ENCODE measurements at regions of chr19 and their contacts with region 1.

Region 1: DNA sequence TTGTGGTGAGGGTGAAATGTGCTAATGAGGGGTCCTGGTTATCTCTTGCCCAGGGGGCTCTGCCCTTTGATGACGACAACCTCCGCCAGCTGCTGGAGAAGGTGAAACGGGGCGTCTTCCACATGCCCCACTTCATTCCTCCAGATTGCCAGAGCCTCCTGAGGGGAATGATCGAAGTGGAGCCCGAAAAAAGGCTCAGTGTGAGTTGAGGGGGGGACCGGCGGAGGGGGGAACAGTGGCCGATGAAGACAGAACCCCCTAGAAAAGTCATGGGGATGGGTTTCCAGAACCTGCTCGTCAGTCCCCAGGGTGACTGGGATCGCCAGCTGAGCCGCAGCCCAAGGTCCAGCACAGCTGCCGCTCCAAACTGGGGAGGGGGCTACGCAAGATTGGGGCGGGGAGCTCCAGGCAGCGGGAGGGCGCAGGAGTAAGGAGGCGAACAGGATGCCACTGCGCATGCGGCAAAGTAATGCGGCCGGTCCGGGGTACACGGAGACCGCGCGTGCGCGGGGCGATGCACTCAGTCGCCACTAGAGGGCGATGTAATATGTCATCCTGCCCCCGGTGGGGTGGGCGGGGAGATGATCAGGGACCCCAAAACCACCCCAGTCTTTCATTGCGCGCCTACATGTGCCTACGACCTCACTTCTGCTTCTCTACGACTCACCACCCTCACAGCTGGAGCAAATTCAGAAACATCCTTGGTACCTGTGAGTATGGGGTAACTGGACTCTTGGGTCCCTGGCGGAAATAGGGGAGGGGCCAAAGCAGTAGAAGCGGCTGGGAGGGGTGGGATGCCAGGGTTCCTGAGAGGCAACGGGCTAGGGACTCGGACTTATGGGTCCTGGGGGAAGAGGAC is 17.9 kb downstream of the BRSK1 start:
- DNase-seq: peak; percentile 77 to 98 (median 90)
- ATAC-seq: peak; percentile 91 to 98 (median 94)
- H3K4me3 ChIP-seq: peak overlapping the region in 2 of 4 donors; percentile 31 to 45
- H3K27ac ChIP-seq: no peak overlapping the region
- H3K4me1 ChIP-seq: no peaks in the 10 kb centered on the region
- H3K27me3 ChIP-seq: no peaks in the 10 kb centered on the region
- CTCF ChIP-seq: peak; percentile 98 to 100 (median 99)

Region 2: DNA sequence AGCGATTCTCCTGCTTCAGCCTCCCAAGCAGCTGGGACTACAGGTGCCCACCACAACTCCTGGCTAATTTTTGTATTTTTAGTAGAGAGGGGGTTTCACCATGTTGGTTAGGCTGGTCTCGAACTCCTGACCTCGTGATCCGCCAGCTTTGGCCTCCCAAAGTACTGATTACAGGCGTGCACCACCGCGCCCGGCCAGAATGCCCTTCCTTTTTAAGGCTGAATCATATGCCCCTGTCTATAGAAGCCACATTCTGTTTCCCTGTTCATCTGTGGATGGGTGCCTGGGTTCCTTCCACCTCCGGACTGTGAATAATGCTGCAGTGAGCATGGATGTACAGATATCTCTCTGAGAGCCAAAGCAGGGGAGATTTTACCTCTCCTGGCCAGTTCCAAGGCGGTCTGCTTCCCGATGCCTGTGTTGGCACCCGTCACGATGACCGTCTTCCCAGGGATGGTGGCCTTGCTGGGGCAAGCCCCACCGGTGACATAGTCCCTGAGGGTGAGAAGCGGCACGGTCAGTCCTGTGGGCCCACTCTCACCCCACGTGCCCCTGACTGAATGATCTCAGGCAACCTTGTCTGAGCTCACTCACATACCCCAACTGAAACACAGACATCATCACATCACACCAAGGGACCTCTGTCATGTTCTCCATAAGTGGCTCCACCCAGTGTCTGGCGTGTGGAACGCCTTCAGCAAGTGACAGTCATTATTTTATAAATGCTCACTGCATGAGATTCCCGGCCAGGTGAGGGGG is 242.7 kb before region 1 on chr19:
- intact Hi-C with region 1: no loop called
- DNase-seq: no peak
- ATAC-seq: no peak
- H3K4me3 ChIP-seq: no peak overlapping the region
- H3K27ac ChIP-seq: no peak overlapping the region
- H3K4me1 ChIP-seq: no peaks in the 10 kb centered on the region
- H3K27me3 ChIP-seq: no peaks in the 10 kb centered on the region
- CTCF ChIP-seq: no peak

Region 3: DNA sequence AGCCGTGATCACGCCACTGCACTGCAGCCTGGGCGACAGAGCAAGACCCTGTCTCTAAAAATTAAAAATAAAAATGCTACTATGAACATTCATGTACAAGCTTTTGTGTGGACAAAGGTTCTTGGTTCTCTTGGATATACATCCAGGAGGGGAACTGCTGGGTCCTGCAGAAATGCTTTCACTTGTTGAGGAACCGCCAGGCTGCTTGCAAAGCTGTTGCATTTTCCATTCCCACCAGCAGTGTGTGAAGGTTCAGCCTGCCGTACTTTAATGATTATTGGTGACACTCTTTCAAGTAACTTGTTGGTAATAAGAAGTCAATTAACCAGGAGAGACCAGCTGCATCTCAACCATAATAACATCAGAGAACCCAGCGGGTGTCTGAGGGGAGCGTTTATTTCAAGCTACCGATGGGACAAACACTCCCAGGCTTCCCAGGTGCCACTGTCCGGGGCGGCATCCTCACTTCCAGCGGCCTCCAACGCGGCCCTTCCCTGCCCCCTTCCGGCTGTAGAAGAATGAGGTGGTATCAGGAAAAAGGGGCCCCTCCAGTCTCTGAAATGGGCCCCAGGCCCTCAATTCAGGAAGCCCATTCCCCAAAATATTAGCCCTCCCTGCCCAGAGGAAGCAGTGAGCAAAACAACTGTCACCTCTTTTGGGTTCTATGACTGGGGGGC is 169.1 kb before region 1 on chr19:
- intact Hi-C with region 1: no loop called
- DNase-seq: no peak
- ATAC-seq: no peak
- H3K4me3 ChIP-seq: no peak overlapping the region
- H3K27ac ChIP-seq: no peak overlapping the region
- H3K4me1 ChIP-seq: no peaks in the 10 kb centered on the region
- H3K27me3 ChIP-seq: peaks cover 0 to 2% (median 0%) of the 10 kb centered on the region in 4 donors
- CTCF ChIP-seq: no peak

Region 4: GRCh38 chr19:55253842-55254624 is 47.7 kb before region 1 on chr19:
- intact Hi-C with region 1: no loop called
- DNase-seq: no peak
- ATAC-seq: no peak
- H3K4me3 ChIP-seq: peak overlapping the region in 1 of 4 donors; percentile 28
- H3K27ac ChIP-seq: peak overlapping the region in 2 of 4 donors; percentile 22 to 27
- H3K4me1 ChIP-seq: peaks cover 0 to 23% (median 8%) of the 10 kb centered on the region in 3 donors
- H3K27me3 ChIP-seq: no peaks in the 10 kb centered on the region
- CTCF ChIP-seq: no peak

Region 5: GRCh38 chr19:55369671-55370304 is 68.1 kb after region 1 on chr19:
- intact Hi-C with region 1: loop called in 1 of 3 experiments (anchors 10 kb)
- DNase-seq: peak in 1 of 6 donors; percentile 78
- ATAC-seq: peak in 2 of 4 donors; percentile 36 to 42
- H3K4me3 ChIP-seq: no peak overlapping the region
- H3K27ac ChIP-seq: no peak overlapping the region
- H3K4me1 ChIP-seq: peaks cover 0 to 3% (median 0%) of the 10 kb centered on the region in 3 donors
- H3K27me3 ChIP-seq: peaks cover 0 to 19% (median 2%) of the 10 kb centered on the region in 4 donors
- CTCF ChIP-seq: no peak

Region 6: GRCh38 chr19:55385740-55386529 is 84.2 kb after region 1 on chr19 and contains the start of gene RPL28:
- intact Hi-C with region 1: loop called in 1 of 3 experiments (anchors 10 kb)
- DNase-seq: peak; percentile 95 to 99 (median 97)
- ATAC-seq: peak; percentile 85 to 92 (median 86)
- H3K4me3 ChIP-seq: peak within 1 kb of the TSS; percentile 76 to 92 (median 80)
- H3K27ac ChIP-seq: peak within 1 kb of the TSS; percentile 74 to 97 (median 90)
- H3K4me1 ChIP-seq: peaks cover 10 to 28% (median 17%) of the 10 kb centered on the region in 3 donors
- H3K27me3 ChIP-seq: no peaks in the 10 kb centered on the region
- CTCF ChIP-seq: no peak
- total RNA-seq, gene RPL28: 420 to 1,198 (median 819) TPM

Region 7: GRCh38 chr19:55407800-55408532 is 106.3 kb after region 1 on chr19:
- intact Hi-C with region 1: loop called in 1 of 3 experiments (anchors 10 kb)
- DNase-seq: peak; percentile 95 to 98 (median 97)
- ATAC-seq: peak; percentile 95 to 99 (median 96)
- H3K4me3 ChIP-seq: peak overlapping the region; percentile 64 to 96 (median 74)
- H3K27ac ChIP-seq: peak overlapping the region; percentile 90 to 95 (median 94)
- H3K4me1 ChIP-seq: peaks cover 0 to 4% (median 0%) of the 10 kb centered on the region in 3 donors
- H3K27me3 ChIP-seq: no peaks in the 10 kb centered on the region
- CTCF ChIP-seq: no peak

Measured in pancreas (tissue), 10 donors.